A549 (cell line): ENCODE measurements at regions of chr17 and their contacts with region 1.

Region 1: DNA sequence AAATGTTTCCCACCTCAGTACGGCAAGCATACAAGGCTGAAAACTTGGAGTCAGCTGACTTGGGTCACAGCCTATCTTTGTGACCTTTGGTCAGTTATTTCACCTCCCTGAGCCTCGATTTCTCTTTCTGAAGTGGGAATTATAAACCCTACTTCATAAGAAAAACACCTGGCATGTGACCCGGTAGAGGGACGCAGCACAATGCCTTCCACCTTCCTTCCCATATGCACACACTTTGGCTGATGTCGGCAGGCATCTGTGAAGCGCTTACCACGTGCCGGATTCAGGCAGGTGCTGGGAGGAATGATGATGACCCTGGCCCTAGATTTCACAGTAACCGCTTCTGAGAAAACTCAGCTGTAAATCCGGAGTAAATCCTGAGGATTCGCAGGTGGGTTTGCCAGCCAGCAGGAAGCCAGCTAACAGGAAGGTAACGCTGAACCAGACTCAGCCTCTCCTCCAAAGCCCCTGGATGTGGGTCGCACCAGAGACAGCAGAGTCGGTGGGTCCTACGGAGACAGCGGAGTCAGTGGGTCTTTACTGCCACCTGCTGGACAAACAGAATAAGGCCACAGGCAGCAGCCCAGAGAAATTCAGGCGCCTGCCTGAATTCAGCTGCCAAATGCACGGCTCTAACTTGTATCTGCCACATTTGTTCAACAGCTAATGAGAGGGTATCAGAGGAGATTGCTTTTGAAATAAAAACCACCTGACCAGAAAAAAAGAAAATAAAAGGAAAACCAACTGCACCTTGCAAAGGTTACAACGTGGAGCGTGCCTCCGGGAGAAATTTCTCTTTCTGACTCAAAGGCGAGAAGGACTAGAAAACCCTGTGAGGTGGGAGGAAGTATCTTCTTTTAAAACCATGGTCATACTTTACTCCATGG is 16.6 kb downstream of the COPRS start:
- DNase-seq: peak; percentile 67 to 87
- ATAC-seq: peak; percentile 85 to 95
- H3K4me3 ChIP-seq: no peak overlapping the region; the same call in 2 of the 3 replicates
- H3K27ac ChIP-seq: peak overlapping the region in 1 of 2 experiments; percentile 68; a peak in 3 of 6 replicates
- H3K4me1 ChIP-seq: peaks cover 10% of the 10 kb centered on the region; the same call in 2 of the 3 replicates
- CTCF ChIP-seq: peak; percentile 99
- EP300 ChIP-seq: no peak
- POLR2A ChIP-seq: no peak
- RAD21 ChIP-seq: peak; percentile 98 to 99

Region 2: GRCh38 chr17:31388770-31389661 is 453.4 kb before region 1 on chr17:
- CTCF ChIA-PET with region 1: interaction called, 18 read pairs
- POLR2A ChIA-PET with region 1: no interaction called
- DNase-seq: peak in 1 of 2 experiments; percentile 82
- ATAC-seq: peak; percentile 57 to 80
- H3K4me3 ChIP-seq: no peak overlapping the region
- H3K27ac ChIP-seq: no peak overlapping the region
- H3K4me1 ChIP-seq: no peaks in the 10 kb centered on the region
- CTCF ChIP-seq: peak; percentile 72
- EP300 ChIP-seq: no peak
- POLR2A ChIP-seq: no peak
- RAD21 ChIP-seq: peak; percentile 64 to 70

Region 3: DNA sequence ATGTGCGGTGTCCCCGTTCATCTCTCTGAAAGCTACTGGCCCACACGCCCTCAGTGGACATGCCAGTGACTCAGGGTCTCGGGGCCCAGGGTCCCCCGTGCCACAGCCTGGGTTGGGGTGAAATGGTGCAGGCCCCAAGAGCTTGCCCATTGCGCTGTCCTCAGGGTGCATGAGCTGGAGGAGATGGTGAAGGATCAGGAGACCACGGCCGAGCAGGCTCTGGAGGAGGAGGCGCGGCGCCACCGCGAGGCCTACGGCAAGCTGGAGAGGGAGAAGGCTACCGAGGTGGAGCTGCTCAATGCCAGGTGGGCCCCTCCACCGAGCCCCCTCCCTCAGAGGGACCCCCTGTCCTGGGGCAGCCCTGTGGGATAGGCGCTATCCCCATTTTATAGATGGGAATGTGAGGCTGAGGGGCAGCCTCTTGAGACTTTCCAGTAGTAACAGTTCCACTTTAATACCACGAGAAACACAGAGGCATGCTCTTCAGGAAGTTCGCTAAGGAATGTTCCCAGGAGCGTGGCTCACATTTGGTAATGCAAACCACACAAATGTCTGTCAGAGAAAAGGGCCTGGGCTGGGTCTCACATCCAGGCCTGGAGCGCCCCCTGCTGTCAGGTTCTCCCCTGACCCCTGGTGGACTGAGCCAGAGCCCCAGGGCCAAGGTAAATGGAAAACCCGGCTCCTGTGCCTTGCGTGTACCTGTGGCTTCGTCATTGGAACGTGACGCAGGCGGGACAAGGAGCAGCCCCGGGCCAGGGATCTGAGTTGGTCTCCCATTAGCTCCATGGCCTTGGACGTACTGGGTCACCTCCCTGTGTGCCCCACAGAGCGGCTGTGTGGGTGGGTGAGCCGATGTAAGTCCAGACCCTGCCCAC is 317.3 kb before region 1 on chr17:
- CTCF ChIA-PET with region 1: interaction called, 85 read pairs
- POLR2A ChIA-PET with region 1: no interaction called
- DNase-seq: peak; percentile 87 to 96
- ATAC-seq: peak; percentile 81 to 95
- H3K4me3 ChIP-seq: peak overlapping the region; percentile 39
- H3K27ac ChIP-seq: peak overlapping the region; percentile 34 to 62; a peak in 3 of 6 replicates
- H3K4me1 ChIP-seq: no peaks in the 10 kb centered on the region
- CTCF ChIP-seq: peak; percentile 97
- EP300 ChIP-seq: no peak
- POLR2A ChIP-seq: no peak
- RAD21 ChIP-seq: peak; percentile 97

Region 4: DNA sequence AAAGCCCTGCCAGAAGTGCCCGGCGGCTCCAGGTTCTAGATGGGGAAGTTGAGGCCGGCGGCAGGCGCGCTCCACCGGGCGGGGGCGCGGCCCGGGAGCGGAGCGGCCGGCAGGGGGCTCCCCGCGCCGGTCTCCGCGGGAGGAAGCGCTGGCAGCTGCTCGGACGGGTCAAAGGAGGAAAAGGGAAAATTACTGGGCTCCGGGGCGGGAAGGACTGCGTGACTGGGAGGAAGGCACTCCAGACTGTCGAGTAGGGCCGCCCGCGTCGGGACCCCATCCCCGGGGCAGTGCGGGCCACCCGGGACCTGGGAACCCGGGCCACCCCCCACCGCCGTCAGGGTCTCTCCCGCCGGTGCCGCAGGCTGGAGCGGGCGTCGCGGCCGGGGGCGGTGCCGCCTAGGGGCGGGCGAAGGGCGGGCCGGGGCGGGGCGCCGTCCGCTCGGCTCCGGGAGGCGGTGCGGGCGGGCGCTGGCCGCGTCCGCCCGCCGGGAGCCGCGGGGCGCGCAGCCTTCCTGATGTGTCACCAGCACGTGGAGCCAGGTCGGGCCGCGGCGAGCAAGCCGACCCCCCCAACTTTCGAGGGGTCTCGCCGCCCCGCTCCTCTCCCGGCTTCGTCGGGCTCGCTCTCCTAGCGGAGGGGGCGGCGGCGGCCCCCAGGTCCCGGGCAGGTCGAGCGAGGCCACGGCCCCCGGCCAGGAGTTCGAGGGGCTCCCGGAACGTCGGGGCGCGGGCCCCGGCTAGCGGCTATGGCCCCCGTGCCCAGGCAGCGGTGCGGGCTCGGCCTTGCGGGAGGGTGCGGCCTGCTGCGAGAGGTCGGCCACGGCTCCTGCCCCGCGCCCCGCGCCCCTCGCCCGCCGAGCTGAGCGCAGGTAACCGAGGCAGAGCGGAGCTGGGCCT is 283.4 kb before region 1 on chr17:
- CTCF ChIA-PET with region 1: interaction called, 377 read pairs
- POLR2A ChIA-PET with region 1: interaction called, 3 read pairs
- DNase-seq: peak; percentile 82 to 91
- ATAC-seq: peak; percentile 85 to 86
- H3K4me3 ChIP-seq: peak overlapping the region; percentile 81
- H3K27ac ChIP-seq: peak overlapping the region; percentile 97 to 98
- H3K4me1 ChIP-seq: peaks cover 31% of the 10 kb centered on the region
- CTCF ChIP-seq: peak; percentile 99
- EP300 ChIP-seq: no peak
- POLR2A ChIP-seq: peak; percentile 67
- RAD21 ChIP-seq: peak; percentile 71 to 96

Region 5: DNA sequence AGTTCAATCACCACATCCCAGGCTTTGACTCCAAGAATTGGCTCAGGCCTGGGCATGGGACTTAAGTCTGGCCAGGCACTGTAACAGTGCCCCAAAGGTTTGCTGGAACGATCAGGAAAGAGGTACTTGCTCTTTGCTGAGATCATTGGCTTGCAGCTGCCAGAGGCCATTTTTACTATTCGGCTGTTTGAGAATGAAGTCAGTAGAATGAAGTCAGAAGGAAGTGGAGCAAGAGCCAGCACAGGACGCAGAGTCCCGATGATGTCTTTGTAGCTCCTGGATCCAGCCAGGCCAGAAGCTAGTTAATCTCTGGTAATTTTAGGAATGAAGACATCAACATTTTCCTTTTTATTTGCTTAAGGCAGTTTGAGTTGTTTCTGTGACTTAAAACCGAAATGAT is 255.5 kb before region 1 on chr17:
- CTCF ChIA-PET with region 1: interaction called, 16 read pairs
- POLR2A ChIA-PET with region 1: no interaction called
- DNase-seq: no peak
- ATAC-seq: no peak
- H3K4me3 ChIP-seq: no peak overlapping the region
- H3K27ac ChIP-seq: no peak overlapping the region
- H3K4me1 ChIP-seq: no peaks in the 10 kb centered on the region
- CTCF ChIP-seq: no peak
- EP300 ChIP-seq: no peak
- POLR2A ChIP-seq: no peak
- RAD21 ChIP-seq: no peak

Region 6: DNA sequence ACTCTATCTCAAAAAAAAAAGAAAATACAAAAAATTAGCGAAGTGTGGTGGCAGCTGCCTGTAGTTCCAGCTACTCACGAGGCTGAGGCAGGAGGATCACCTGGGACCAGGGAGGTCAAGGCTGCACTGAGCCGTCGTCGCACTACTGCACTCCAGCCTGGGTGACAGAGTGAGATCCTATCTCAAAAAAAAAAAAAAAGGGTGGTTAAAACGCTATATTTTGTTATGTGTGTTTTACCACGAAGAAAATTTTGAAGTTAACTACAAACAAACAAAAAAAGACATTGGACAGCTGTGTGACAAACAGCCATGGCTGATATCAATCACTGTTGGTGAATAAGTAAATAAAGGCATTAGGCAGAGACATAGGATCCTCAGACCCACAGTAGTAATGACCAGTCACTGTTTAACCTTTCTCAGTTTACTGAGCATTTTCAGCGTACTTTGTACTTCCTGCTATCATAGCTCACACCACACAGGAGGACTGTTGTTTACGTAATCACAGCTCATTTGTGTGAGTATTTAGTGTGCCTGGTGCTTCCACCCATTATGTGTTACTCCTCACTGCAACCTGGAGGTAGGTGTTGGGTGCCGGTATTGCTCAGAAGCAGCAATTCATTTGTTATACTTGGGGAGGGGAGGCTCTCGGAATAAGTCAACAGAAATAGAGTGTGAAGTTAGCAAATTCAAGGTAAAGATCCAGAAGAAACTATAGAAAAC is 38.8 kb before region 1 on chr17:
- CTCF ChIA-PET with region 1: interaction called, 12 read pairs
- POLR2A ChIA-PET with region 1: no interaction called
- DNase-seq: peak in 1 of 2 experiments; percentile 72
- ATAC-seq: peak; percentile 69 to 86
- H3K4me3 ChIP-seq: no peak overlapping the region
- H3K27ac ChIP-seq: peak overlapping the region; percentile 27 to 66; a peak in 5 of 6 replicates
- H3K4me1 ChIP-seq: peaks cover 18% of the 10 kb centered on the region
- CTCF ChIP-seq: no peak
- EP300 ChIP-seq: no peak
- POLR2A ChIP-seq: no peak
- RAD21 ChIP-seq: no peak

Region 7: DNA sequence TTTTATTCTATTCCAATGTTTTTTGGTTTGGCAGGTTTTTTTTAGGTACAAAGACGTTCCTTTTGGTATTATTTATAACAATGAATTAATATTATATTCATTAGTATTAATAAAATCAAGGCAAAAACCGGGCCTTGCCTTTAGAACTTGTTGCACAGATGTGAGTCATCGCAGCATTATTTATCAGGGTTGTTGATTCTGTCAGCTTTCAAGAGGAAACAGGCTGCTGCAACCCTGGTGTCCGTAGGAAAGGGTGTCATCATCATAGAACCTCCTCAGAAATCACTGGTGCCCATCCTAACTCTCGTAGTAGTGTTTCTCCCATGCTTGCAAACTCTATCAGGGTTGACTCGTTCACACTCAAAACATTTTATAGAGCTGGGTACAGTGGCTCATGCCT is 154.6 kb after region 1 on chr17:
- CTCF ChIA-PET with region 1: no interaction called
- POLR2A ChIA-PET with region 1: no interaction called
- DNase-seq: no peak
- ATAC-seq: no peak; a peak in 1 of 6 replicates
- H3K4me3 ChIP-seq: no peak overlapping the region
- H3K27ac ChIP-seq: no peak overlapping the region
- H3K4me1 ChIP-seq: no peaks in the 10 kb centered on the region
- CTCF ChIP-seq: no peak
- EP300 ChIP-seq: no peak
- POLR2A ChIP-seq: no peak
- RAD21 ChIP-seq: no peak

Region 8: DNA sequence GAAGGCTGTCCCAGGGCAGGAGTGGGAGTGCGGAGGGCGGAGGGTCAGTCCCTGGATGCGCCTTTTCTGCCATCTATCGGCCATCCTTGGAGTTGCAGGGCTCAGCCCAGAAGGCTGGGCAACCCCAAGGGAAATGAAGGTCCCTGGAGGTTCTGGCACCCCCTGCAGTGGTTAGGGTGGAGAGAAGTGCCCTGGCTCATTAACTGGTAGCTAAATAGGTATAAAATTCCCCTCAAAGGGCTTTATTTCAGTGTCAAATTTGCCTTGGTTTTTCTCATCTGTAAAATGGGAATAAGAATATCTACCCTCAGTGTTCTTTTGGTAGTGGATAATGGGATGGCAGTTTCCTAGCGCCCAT is 477.1 kb after region 1 on chr17:
- CTCF ChIA-PET with region 1: no interaction called
- POLR2A ChIA-PET with region 1: no interaction called
- DNase-seq: peak; percentile 69 to 88
- ATAC-seq: peak; percentile 89 to 96
- H3K4me3 ChIP-seq: no peak overlapping the region
- H3K27ac ChIP-seq: no peak overlapping the region
- H3K4me1 ChIP-seq: no peaks in the 10 kb centered on the region
- CTCF ChIP-seq: peak; percentile 94
- EP300 ChIP-seq: no peak
- POLR2A ChIP-seq: no peak
- RAD21 ChIP-seq: peak; percentile 97 to 98